ENCODE measurements at regions of chr12 and their contacts with region 1.

Region 1: DNA sequence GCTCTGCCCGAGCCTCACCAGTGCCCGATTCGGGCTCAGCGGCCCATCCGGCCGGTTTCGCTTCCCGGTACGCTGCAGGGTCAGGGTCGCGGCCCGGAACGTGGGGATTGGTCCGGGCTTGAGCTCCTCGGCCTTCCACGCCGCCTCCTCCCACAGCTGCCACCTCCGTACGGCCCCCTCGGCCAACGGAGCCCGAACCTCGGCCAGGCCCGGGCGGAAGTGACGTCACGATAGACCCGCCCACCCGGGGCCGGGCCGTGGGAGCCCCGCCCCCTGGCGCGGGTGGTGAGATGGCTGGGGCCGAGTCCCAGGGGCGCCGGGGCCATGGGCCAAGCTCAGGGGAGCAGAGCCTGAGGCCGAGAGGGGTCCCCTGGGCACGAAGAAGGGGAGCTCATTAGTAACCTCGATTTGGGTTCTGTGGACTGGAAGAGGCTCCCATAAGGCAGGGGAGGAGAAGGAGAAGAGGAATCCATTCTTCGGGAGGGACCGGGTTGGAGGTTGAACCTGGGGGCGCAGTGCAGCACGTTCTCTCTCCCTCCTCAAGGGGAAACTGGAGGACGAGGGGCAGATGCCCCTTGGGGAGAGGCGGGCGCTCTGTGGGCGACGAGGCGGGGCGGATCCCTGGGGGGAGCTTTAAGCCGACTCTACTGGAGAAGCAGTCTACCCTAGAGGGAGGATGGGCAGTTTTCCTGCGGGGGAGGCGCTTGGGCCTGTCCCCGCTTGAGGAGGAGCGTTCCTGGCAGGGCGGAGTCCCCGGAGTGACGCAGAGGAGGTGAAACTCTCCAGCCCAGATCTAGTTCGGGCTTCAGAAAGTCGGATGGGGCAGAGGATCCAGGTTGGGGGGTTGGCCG is at the start of gene MLF2:
- DNase-seq: peak; percentile 98
- H3K4me3 Mint-ChIP-seq: peak within 1 kb of the TSS; percentile 89
- H3K27ac Mint-ChIP-seq: peak within 1 kb of the TSS; percentile 98
- H3K4me1 Mint-ChIP-seq: peaks cover 29% of the 10 kb centered on the region
- H3K27me3 Mint-ChIP-seq: no peaks in the 10 kb centered on the region
- total RNA-seq, gene MLF2: 90.7 to 95.4 TPM

Region 2: GRCh38 chr12:6735448-6736191 is 17.5 kb before region 1 on chr12:
- CTCF ChIA-PET with region 1: interaction called, 14 read pairs
- POLR2A ChIA-PET with region 1: no interaction called
- DNase-seq: peak; percentile 51
- H3K4me3 Mint-ChIP-seq: no peak overlapping the region
- H3K27ac Mint-ChIP-seq: no peak overlapping the region
- H3K4me1 Mint-ChIP-seq: peaks cover 10% of the 10 kb centered on the region
- H3K27me3 Mint-ChIP-seq: no peaks in the 10 kb centered on the region

Region 3: DNA sequence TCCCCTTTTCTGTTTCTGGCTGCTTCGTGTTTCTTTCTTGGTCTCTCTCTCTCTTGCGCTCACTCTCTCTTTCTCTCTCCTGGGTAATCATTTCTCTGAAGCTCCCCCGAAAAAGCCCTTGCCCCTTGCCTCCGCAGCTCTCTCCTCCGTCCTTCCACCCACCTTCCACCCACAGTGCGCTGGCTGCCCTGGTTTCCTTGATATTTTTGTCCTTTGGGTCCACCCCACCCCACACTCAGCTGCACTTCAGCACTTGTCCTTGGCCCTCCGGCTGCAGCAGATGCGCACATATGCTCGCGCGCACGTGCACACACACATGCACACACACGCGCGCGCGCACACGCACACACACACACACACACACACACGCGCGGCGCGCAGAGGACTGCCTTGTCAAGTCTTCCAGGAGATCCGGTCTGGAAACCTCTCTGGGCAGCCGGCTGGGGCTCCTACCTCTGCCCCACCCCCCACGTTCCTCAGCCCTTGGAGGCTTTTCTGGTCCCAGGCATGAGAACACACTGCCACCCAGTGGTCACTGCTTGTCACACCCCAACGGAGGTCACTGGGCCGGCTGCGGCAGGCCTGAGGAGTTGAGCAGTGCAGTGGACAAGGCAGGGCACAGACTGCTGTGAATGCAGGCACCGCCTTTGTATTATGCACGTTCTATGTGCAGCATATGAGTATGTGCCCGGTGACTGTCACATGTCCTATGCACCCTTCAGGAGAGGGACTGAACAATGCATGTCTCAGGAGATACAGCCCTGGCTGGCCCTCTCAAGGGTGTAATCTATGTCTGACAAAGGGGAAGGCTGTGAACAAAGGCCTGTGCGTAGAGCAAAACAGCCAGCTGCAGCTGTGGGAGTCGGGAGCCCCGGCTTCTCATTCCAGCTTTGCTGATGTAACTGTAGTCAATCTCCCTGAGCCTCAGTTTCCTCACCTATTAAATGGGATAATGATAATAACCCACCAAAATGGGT is 25.7 kb after region 1 on chr12:
- CTCF ChIA-PET with region 1: interaction called, 28 read pairs
- POLR2A ChIA-PET with region 1: no interaction called
- DNase-seq: peak; percentile 93
- H3K4me3 Mint-ChIP-seq: peak overlapping the region; percentile 70
- H3K27ac Mint-ChIP-seq: peak overlapping the region; percentile 84
- H3K4me1 Mint-ChIP-seq: peaks cover 69% of the 10 kb centered on the region
- H3K27me3 Mint-ChIP-seq: peaks cover 5% of the 10 kb centered on the region

Region 4: GRCh38 chr12:6810758-6811157 is 57.6 kb after region 1 on chr12:
- CTCF ChIA-PET with region 1: interaction called, 10 read pairs
- POLR2A ChIA-PET with region 1: no interaction called
- DNase-seq: no peak
- H3K4me3 Mint-ChIP-seq: no peak overlapping the region
- H3K27ac Mint-ChIP-seq: peak overlapping the region; percentile 43
- H3K4me1 Mint-ChIP-seq: peaks cover 20% of the 10 kb centered on the region
- H3K27me3 Mint-ChIP-seq: no peaks in the 10 kb centered on the region

Region 5: DNA sequence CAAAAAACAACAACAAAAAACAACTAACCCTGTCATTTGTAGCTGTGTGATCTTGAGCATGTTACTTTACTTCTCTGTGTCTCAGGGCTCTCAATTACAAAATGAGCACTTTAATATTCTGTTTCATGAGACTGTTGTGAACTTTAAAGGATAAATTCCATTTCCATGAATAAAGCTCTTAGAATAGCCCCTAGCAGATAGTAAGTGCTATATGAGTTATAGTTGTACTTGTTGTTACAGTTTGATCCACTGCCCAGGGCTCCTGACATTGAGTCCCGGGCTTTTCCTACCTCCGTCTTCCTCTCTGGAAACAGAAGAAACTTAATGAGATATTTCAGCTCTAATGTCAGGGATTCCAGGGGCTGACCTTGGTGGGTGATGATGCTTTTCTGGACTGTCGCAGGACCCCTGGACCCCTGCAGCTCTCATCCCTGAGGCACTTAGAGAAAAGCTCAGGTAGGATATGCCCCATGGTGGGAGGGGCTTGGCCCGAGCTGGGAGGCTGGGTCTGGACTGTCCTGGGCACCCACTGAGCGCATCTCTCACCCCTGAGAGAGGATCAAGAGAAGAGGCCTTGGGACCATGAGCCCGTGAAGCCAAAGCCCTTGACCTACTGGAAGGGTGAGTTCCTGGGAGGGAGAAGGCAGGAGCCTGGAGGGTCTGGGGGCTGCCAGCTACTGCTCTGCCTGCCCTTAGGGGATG is 80.2 kb after region 1 on chr12:
- CTCF ChIA-PET with region 1: interaction called, 22 read pairs
- POLR2A ChIA-PET with region 1: interaction called, 3 read pairs
- DNase-seq: no peak
- H3K4me3 Mint-ChIP-seq: no peak overlapping the region
- H3K27ac Mint-ChIP-seq: no peak overlapping the region
- H3K4me1 Mint-ChIP-seq: peaks cover 10% of the 10 kb centered on the region
- H3K27me3 Mint-ChIP-seq: peaks cover 30% of the 10 kb centered on the region

Region 6: DNA sequence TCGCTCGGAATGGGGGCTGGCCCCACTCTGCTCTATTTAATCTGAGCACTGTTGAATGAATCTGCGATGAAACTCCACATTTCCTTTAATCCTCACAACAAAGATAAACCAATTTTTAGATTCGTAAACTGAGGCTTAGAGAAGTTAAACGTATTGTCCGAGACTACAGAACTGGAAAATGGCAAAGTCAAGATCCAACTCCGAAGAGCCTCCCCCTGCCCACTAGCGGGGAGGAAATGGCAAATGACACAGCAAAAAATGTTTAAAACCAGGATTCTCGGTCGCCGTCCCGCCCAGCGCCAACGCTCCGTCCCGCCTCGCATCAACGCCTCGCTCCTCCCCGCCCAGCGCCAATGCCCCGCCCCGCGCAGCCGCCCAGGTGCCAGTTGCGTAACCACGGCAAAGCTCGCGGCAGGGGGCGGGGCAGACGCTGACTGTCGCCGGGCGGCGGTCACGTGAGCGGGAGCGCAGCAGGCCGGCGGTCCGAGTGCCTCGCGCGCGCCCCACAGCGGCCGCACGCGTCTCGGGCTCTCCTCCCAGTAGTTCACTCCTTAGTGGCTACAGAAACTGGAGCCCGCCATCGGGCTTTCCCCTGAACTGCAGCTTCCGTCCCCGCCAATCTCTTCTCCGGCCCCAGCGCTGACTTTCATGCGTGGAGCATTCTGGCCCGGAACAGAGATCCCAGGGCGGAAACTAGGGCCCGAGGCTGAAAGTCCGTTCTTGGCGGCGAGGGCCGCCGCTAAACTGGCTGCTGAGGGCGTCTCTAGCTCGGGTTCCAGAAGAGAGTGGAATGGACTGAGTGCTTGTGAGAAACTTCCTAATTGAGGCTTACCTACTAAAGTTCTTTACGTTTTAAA is 137.9 kb after region 1 on chr12:
- CTCF ChIA-PET with region 1: interaction called, 13 read pairs
- POLR2A ChIA-PET with region 1: no interaction called
- DNase-seq: peak; percentile 98
- H3K4me3 Mint-ChIP-seq: peak overlapping the region; percentile 82
- H3K27ac Mint-ChIP-seq: peak overlapping the region; percentile 96
- H3K4me1 Mint-ChIP-seq: peaks cover 29% of the 10 kb centered on the region
- H3K27me3 Mint-ChIP-seq: no peaks in the 10 kb centered on the region

Measured in activated CD4-positive, alpha-beta T cell treated with anti-CD3 and anti-CD28 coated beads, Interleukin-2, amount 10 ng/mL, durations not matched to agents 7 days and 5 days (primary cell).